ENCODE measurements at regions of chr1 and their contacts with region 1.

Region 1: GRCh38 chr1:31394628-31395193 is 18.3 kb upstream of the SERINC2 start:
- DNase-seq: peak; percentile 71 to 78
- ATAC-seq: peak; percentile 95 to 98
- H3K4me3 ChIP-seq: peak overlapping the region; percentile 32; the same call in 2 of the 3 replicates
- H3K27ac ChIP-seq: peak overlapping the region; percentile 48 to 74; a peak in 5 of 6 replicates
- H3K4me1 ChIP-seq: 0 out of 3 replicates have a peak, but pooled peaks cover 5% of the 10 kb centered on the region
- CTCF ChIP-seq: peak; percentile 72
- EP300 ChIP-seq: no peak
- POLR2A ChIP-seq: no peak
- RAD21 ChIP-seq: peak; percentile 67 to 74

Region 2: DNA sequence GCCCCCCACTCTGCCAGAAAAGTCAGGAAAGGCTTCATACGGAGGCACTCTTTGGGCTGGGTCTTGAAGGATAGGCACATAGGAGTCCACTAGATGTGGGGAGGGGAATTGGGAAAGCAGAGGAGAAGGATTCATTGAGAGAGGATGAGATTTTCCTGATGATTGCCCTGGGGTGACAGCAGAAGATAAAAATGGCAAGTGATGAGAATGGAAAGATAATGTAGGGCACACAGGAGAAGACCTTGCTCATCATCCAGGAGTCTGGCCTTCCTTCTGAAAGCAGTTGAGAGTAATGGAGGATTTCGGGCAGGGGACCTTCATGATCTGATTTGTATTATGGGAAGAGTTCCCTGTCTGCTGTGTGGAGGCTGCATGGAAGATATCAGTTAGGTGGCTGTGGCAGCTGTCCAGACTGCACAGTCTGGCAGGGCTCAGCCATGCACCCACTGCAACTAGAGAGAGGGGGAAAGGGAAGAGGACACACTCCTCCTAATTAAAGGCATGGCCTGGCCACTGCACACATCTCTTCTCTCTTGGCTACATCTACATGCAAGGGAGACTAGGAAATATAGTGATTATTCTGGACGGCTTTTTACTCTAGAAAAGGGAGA is 12.2 kb before region 1 on chr1:
- CTCF ChIA-PET with region 1: interaction called, 33 read pairs
- POLR2A ChIA-PET with region 1: no interaction called
- DNase-seq: no peak
- ATAC-seq: no peak; a peak in 1 of 6 replicates
- H3K4me3 ChIP-seq: no peak overlapping the region
- H3K27ac ChIP-seq: no peak overlapping the region
- H3K4me1 ChIP-seq: peaks cover 3% of the 10 kb centered on the region; the same call in 2 of the 3 replicates
- CTCF ChIP-seq: no peak
- EP300 ChIP-seq: no peak
- POLR2A ChIP-seq: no peak
- RAD21 ChIP-seq: no peak

Region 3: DNA sequence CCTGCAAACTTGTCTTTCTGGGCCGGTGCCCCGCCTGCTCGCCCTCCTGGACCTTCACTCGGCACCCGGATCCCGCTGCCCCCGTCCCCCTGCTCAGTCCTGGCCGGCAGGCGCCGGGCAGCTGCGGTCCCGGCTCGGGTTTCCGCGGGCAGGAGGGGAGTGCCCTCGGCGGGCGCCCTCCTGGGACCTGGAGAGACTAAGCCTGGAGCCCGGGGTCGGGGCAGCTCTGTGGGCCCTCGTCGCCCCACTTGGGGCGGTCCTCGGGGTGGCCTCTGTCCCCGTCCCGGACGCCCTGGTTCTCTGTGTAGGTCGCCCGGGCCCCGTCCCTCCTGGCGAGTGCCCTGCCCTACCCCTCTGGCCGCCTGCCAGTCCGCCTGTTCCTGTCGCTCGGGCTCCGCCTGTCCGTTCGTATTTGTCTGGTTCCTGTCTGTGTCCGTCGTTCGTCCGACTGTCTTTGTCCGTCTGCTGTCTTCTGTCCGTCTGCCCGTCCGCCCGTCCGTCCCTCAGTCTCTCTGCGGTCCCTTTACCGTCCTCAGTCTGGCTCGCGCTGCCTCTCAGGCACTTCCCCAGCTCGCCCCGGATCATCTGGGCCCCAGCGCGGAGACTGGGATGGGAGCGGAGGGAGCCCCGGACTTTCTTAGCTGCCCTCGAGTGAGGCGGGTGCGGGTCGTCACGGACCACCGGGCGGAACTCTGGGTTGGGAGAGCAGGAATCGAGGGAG is 18.9 kb after region 1 on chr1:
- CTCF ChIA-PET with region 1: interaction called, 151 read pairs
- POLR2A ChIA-PET with region 1: no interaction called
- DNase-seq: peak; percentile 25 to 48
- ATAC-seq: peak; percentile 73 to 82
- H3K4me3 ChIP-seq: peak overlapping the region; percentile 62
- H3K27ac ChIP-seq: peak overlapping the region; percentile 69 to 97
- H3K4me1 ChIP-seq: peaks cover 13% of the 10 kb centered on the region
- CTCF ChIP-seq: no peak
- EP300 ChIP-seq: no peak
- POLR2A ChIP-seq: no peak
- RAD21 ChIP-seq: no peak

Region 4: GRCh38 chr1:31541194-31541593 is 146.5 kb after region 1 on chr1:
- CTCF ChIA-PET with region 1: interaction called, 10 read pairs
- POLR2A ChIA-PET with region 1: no interaction called
- DNase-seq: no peak
- ATAC-seq: no peak
- H3K4me3 ChIP-seq: no peak overlapping the region
- H3K27ac ChIP-seq: no peak overlapping the region
- H3K4me1 ChIP-seq: no peaks in the 10 kb centered on the region
- CTCF ChIP-seq: no peak
- EP300 ChIP-seq: no peak
- POLR2A ChIP-seq: no peak
- RAD21 ChIP-seq: no peak

Region 5: GRCh38 chr1:31789259-31790065 is 394.8 kb after region 1 on chr1:
- CTCF ChIA-PET with region 1: interaction called, 11 read pairs
- POLR2A ChIA-PET with region 1: no interaction called
- DNase-seq: peak; percentile 86 to 94
- ATAC-seq: peak; percentile 72 to 88
- H3K4me3 ChIP-seq: peak overlapping the region; percentile 69
- H3K27ac ChIP-seq: peak overlapping the region; percentile 94 to 95
- H3K4me1 ChIP-seq: peaks cover 13% of the 10 kb centered on the region
- CTCF ChIP-seq: peak; percentile 72
- EP300 ChIP-seq: no peak
- POLR2A ChIP-seq: no peak
- RAD21 ChIP-seq: peak; percentile 90 to 97

Measured in A549 (cell line).